Ovary (tissue), 10 donors: ENCODE measurements at regions of chr19 and their contacts with region 1.

Region 1: GRCh38 chr19:16324384-16325160 is at the start of gene KLF2:
- DNase-seq: peak; percentile 94 to 98 (median 95)
- H3K4me3 ChIP-seq: peak within 1 kb of the TSS; percentile 70
- H3K27ac ChIP-seq: peak within 1 kb of the TSS; percentile 88 to 89
- H3K4me1 ChIP-seq: peaks cover 11% of the 10 kb centered on the region
- H3K27me3 ChIP-seq: no peaks in the 10 kb centered on the region
- CTCF ChIP-seq: no peak
- EP300 ChIP-seq: peak; percentile 44
- POLR2A ChIP-seq: peak; percentile 92
- total RNA-seq, gene KLF2: 69.5 to 399 (median 97.8) TPM

Region 2: DNA sequence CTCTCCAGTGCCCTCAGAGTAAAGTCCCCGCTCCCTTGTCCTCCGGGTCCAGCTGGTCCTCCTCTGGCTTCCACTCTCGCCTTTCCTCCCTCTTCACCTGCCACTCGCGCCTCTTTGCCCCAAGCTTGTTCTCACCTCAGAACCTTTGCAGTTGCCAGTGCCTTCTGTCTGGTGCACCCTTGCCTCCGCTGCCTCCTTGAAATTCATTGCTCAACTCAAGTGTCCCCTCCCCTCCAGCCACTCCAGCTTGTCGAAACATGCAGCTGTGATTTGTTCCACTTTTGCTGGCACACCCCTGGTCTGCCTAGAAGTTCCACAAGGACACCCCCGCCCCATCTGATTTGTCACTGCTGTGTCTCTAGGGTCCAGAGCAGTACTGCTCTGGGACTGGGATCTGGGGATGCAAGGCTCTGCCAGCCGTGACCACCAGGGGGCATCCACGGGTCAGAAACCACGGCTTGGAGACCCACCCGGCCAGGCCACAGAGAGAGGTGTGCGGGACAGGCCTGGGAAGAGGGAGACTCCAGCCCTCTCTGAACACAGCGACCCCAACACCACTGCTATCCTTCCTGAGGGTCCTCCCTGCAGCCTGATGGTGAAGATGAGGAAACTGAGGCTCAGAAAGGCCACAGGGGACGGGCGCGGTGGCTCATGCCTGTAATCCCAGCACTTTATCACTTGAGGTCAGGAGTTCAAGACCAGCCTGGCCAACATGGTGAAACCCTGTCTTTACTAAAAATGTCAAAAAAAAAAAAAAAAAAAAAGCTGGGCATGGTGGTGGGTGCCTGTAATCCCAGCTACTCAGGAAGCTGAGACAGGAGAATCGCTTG is 77.0 kb before region 1 on chr19:
- intact Hi-C with region 1: loop called in 2 of 4 experiments (anchors 5 to 10 kb)
- DNase-seq: peak; percentile 83 to 93 (median 92)
- H3K4me3 ChIP-seq: no peak overlapping the region
- H3K27ac ChIP-seq: no peak overlapping the region
- H3K4me1 ChIP-seq: peaks cover 2% of the 10 kb centered on the region
- H3K27me3 ChIP-seq: no peaks in the 10 kb centered on the region
- CTCF ChIP-seq: peak; percentile 83 to 98 (median 98)
- EP300 ChIP-seq: no peak
- POLR2A ChIP-seq: peak; percentile 26

Region 3: GRCh38 chr19:16283210-16284061 is 41.1 kb before region 1 on chr19:
- intact Hi-C with region 1: loop called in 2 of 4 experiments (anchors 2 to 5 kb)
- DNase-seq: peak; percentile 89 to 93 (median 91)
- H3K4me3 ChIP-seq: peak overlapping the region; percentile 22
- H3K27ac ChIP-seq: peak overlapping the region; percentile 82 to 97
- H3K4me1 ChIP-seq: peaks cover 15% of the 10 kb centered on the region
- H3K27me3 ChIP-seq: no peaks in the 10 kb centered on the region
- CTCF ChIP-seq: no peak
- EP300 ChIP-seq: peak; percentile 38
- POLR2A ChIP-seq: peak; percentile 81

Region 4: DNA sequence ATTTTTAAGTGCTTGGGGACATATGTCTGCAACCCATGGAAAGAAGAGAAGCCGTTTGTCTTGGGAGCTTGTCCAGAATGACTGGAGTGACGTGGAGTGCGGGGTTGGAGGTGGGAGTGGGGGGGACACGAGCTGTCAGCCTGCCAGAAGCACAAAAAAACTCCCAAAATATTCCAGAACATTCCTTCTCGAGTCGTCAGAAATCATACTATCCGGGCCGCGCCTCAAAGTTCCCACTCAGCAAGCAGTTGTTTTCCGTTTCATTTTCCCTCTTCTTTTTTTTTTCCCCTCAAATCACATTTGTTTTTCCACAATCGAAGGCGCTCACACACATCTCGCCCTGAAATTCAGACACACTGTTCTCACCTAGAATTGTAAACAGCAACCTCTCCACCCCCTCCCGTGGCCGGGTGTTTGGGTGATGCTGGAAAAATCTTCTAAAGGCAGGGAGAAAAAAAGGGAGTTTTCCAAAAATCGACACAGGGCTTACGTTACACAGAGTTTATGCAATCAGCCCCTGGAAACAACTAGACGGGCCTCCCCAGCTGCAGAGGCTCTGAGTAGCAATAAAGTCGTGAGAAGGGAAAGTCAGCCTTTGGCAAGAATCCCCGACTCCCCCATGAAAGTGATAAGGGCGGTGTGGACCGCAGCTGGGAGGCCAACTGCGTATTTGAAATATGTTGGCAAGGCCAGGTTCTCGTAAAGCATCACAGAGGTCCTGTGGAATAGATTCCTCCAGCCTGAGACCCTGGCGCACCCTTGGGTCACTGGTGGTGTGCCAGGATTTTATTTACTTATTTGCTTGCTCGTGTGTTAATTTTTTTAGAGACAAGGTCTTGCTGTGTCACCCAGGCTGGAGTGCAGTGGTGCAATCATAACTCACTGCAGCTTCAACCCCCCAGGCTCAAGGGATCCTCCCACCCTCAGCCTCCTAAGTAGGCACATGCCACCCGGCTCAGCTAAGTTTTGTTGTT is 31.2 kb before region 1 on chr19:
- intact Hi-C with region 1: loop called in 2 of 4 experiments (anchors 5 kb)
- DNase-seq: peak; percentile 88 to 96 (median 92)
- H3K4me3 ChIP-seq: no peak overlapping the region
- H3K27ac ChIP-seq: peak overlapping the region; percentile 70 to 90
- H3K4me1 ChIP-seq: peaks cover 11% of the 10 kb centered on the region
- H3K27me3 ChIP-seq: no peaks in the 10 kb centered on the region
- CTCF ChIP-seq: no peak
- EP300 ChIP-seq: peak; percentile 60
- POLR2A ChIP-seq: peak; percentile 28

Region 5: DNA sequence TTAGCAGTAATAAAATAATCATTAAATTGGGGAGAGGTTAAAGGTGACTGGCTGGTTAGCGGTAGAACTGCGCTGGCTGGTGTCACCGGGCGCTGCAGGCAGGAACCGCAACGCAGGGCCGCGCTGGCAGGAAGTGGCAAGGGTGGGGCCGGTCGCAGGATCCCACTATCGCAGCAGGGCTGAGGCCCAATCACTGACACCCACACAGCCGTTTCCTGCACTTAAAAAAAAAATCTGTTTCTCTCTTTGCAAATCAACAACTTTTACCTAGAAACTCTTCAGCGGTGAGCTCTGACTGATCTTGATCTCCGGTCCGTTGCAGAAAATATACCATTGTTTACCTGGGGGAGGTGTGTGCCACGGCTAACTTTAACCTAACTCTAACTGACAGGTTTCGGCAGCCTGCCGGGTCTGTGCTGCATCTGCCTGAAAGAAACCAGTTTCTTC is 47.0 kb after region 1 on chr19:
- intact Hi-C with region 1: loop called in 1 of 4 experiments (anchors 5 kb)
- DNase-seq: peak in 2 of 5 donors; percentile 41 to 48
- H3K4me3 ChIP-seq: no peak overlapping the region
- H3K27ac ChIP-seq: peak overlapping the region in 1 of 2 donors; percentile 88
- H3K4me1 ChIP-seq: peaks cover 19% of the 10 kb centered on the region
- H3K27me3 ChIP-seq: no peaks in the 10 kb centered on the region
- CTCF ChIP-seq: no peak
- EP300 ChIP-seq: no peak
- POLR2A ChIP-seq: no peak

Region 6: GRCh38 chr19:16382775-16383543 is 58.4 kb after region 1 on chr19:
- intact Hi-C with region 1: loop called in 1 of 4 experiments (anchors 5 kb)
- DNase-seq: peak; percentile 88 to 95 (median 91)
- H3K4me3 ChIP-seq: no peak overlapping the region
- H3K27ac ChIP-seq: peak overlapping the region; percentile 84 to 85
- H3K4me1 ChIP-seq: peaks cover 11% of the 10 kb centered on the region
- H3K27me3 ChIP-seq: no peaks in the 10 kb centered on the region
- CTCF ChIP-seq: peak; percentile 79 to 94 (median 92)
- EP300 ChIP-seq: no peak
- POLR2A ChIP-seq: peak; percentile 47